Ascending aorta (tissue), 2 donors: ENCODE measurements at regions of chr4 and their contacts with region 1.

Region 1: GRCh38 chr4:141346144-141346543 is 125.4 kb downstream of the ZNF330 start:
- DNase-seq: no peak
- H3K4me3 ChIP-seq: no peak overlapping the region
- H3K27ac ChIP-seq: no peak overlapping the region
- H3K4me1 ChIP-seq: peaks cover 3 to 18% of the 10 kb centered on the region in 2 donors
- H3K27me3 ChIP-seq: no peaks in the 10 kb centered on the region
- CTCF ChIP-seq: peak; percentile 33 to 69 (median 51)

Region 2: GRCh38 chr4:141410839-141411238 is 64.7 kb after region 1 on chr4:
- intact Hi-C with region 1: loop called (anchors 5 kb)
- DNase-seq: no peak
- H3K4me3 ChIP-seq: no peak overlapping the region
- H3K27ac ChIP-seq: peak overlapping the region in 1 of 2 donors; percentile 40
- H3K4me1 ChIP-seq: peaks cover 0 to 2% of the 10 kb centered on the region in 2 donors
- H3K27me3 ChIP-seq: no peaks in the 10 kb centered on the region
- CTCF ChIP-seq: no peak

Region 3: DNA sequence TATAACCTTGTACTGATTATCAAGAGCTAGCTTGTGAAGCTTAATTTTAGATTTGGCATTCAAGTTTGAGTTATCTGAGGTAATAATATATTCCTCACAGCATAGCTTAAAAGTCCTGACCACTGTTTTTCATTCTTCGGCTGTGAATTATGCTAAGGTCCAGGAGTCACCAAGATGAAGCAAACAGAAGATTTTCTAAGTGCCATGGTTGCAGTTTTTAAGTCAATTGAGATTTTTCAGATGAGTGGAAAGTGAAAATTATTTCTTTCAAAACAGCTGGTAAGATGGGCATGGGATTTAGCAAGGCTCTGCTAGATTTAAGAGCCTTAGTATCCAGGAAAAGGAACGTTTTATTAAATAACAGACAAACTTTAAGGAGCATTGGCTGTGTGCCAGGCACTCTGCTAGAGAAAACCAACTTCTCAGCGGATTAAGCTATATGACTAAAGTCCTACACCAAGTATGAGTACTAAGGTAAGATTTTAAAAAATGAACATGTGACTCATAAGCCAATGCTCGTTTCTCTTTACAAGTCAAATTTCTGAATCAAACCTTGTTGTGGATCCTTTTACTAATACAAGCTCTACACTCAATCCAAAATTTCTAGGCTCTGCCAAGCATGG is 140.3 kb after region 1 on chr4:
- intact Hi-C with region 1: loop called (anchors 5 kb)
- DNase-seq: peak in 1 of 2 donors; percentile 65
- H3K4me3 ChIP-seq: peak overlapping the region in 1 of 2 donors; percentile 54
- H3K27ac ChIP-seq: peak overlapping the region; percentile 39 to 50
- H3K4me1 ChIP-seq: peaks cover 0 to 5% of the 10 kb centered on the region in 2 donors
- H3K27me3 ChIP-seq: no peaks in the 10 kb centered on the region
- CTCF ChIP-seq: no peak

Region 4: DNA sequence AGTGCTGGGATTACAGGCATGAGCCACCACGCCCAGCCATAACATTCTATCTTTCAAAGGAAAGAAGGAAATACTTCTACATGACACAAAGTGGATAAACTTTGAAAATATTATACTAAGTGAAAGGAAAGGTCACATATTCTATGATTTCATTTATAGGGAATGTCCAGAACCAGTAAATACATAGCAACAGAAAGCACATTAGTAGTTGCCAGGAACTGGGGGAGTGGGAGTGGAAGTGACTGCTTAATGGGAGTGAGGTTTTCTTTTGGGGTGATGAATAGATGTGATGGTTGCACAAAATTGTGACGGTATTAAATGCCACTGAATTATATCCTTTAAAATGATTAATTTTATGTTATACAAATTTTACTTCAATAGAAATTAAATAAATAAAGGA is 194.5 kb after region 1 on chr4:
- intact Hi-C with region 1: loop called (anchors 5 kb)
- DNase-seq: no peak
- H3K4me3 ChIP-seq: no peak overlapping the region
- H3K27ac ChIP-seq: no peak overlapping the region
- H3K4me1 ChIP-seq: peaks cover 0 to 16% of the 10 kb centered on the region in 2 donors
- H3K27me3 ChIP-seq: no peaks in the 10 kb centered on the region
- CTCF ChIP-seq: no peak

Region 5: DNA sequence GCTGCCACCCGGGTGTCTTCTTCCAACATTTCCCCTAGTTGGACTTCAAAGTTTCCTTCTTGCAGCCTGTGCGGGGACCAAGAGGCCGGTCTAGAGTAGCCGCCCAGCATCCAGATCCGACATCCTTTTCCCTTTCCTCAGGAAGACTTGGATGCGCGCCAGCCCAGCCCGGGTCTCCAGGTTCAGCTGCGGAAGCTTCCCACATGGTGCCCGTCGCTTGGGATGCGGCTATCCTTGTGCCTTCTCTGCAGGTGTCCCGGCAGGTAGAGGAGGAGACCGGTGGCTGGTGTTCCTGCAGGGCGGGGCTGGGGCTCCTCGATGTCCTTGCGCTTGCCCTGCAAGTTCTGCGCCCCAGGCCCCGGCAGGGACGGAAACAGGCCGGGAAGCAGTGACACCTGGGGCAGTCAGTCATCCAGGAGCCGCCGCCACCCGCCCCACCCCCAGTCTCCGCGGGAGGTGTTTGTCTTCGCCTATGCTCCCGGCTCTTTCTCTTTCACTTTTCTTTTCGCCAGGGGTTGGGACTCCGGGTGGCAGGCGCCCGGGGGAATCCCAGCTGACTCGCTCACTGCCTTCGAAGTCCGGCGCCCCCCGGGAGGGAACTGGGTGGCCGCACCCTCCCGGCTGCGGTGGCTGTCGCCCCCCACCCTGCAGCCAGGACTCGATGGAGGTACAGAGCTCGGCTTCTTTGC is 290.1 kb after region 1 on chr4 and contains the start of gene IL15:
- intact Hi-C with region 1: loop called (anchors 5 kb)
- DNase-seq: peak; percentile 29 to 79
- H3K4me3 ChIP-seq: peak within 1 kb of the TSS; percentile 88 to 94
- H3K27ac ChIP-seq: peak within 1 kb of the TSS; percentile 89 to 92
- H3K4me1 ChIP-seq: peaks cover 0 to 9% of the 10 kb centered on the region in 2 donors
- H3K27me3 ChIP-seq: no peaks in the 10 kb centered on the region
- CTCF ChIP-seq: no peak
- total RNA-seq, gene IL15: 11.5 TPM

Region 6: DNA sequence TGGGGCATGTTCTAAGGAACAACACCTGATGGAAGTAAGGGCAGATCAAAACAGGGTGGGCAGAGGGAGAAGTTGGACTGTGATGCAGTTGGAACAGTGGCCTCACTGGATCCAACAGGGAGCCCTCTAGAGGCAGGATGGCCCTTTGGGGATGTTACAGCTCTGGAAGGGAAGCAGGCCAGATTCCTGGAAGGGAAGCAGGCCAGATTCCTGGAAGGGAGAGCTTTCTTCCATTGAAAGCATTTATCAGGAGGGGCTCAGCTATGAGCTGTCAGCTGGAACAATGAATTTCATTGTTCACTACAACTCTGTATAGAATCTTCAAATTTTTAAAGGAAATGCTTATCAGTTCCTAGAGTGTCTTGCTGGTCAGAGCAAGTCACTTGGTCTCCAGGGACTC is 308.0 kb after region 1 on chr4:
- intact Hi-C with region 1: loop called (anchors 5 kb)
- DNase-seq: peak in 1 of 2 donors; percentile 69
- H3K4me3 ChIP-seq: no peak overlapping the region
- H3K27ac ChIP-seq: peak overlapping the region; percentile 62 to 78
- H3K4me1 ChIP-seq: peaks cover 0 to 20% of the 10 kb centered on the region in 2 donors
- H3K27me3 ChIP-seq: no peaks in the 10 kb centered on the region
- CTCF ChIP-seq: peak in 2 of 3 experiments; percentile 18 to 34

Region 7: GRCh38 chr4:141711014-141711610 is 365.0 kb after region 1 on chr4:
- intact Hi-C with region 1: loop called (anchors 2 kb)
- DNase-seq: no peak
- H3K4me3 ChIP-seq: no peak overlapping the region
- H3K27ac ChIP-seq: no peak overlapping the region
- H3K4me1 ChIP-seq: no peaks in the 10 kb centered on the region
- H3K27me3 ChIP-seq: no peaks in the 10 kb centered on the region
- CTCF ChIP-seq: peak; percentile 38 to 65 (median 48)